ENCODE measurements at regions of chr2 and their contacts with region 1.

Region 1: DNA sequence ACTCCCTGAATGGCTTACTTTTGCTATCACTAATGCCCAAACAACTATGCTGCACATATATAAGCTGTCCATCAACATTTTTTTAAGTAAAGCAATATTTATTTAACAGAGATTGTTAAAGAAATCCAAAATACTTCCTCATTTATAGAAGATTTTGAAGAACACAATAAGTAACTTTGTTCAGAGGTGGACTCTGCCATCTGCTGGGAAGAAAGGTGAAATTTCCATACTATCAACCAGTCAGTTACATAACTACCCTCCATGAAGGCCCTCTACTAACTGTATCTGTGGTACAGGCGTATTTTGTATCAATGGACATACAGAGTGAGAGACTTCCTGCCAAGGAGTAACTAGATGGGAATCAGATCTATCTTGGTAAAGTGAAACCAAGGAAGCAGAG is 106.0 kb downstream of the DTNB start:
- DNase-seq: peak in 1 of 2 experiments; percentile 32
- H3K4me3 ChIP-seq: no peak overlapping the region
- H3K4me3 Mint-ChIP-seq: no peak overlapping the region
- H3K27ac Mint-ChIP-seq: no peak overlapping the region
- H3K4me1 ChIP-seq: no peaks in the 10 kb centered on the region
- H3K4me1 Mint-ChIP-seq: no peaks in the 10 kb centered on the region
- H3K27me3 ChIP-seq: no peaks in the 10 kb centered on the region
- H3K27me3 Mint-ChIP-seq: no peaks in the 10 kb centered on the region
- CTCF ChIP-seq: peak; percentile 51 to 52

Region 2: GRCh38 chr2:25309402-25309801 is 258.0 kb before region 1 on chr2:
- CTCF ChIA-PET with region 1: no interaction called
- POLR2A ChIA-PET with region 1: no interaction called
- intact Hi-C with region 1: loop called (anchors 1 kb)
- DNase-seq: peak; percentile 58 to 68
- H3K4me3 ChIP-seq: no peak overlapping the region
- H3K4me3 Mint-ChIP-seq: no peak overlapping the region
- H3K27ac Mint-ChIP-seq: no peak overlapping the region
- H3K4me1 ChIP-seq: 0 out of 2 replicates have a peak, but pooled peaks cover 3% of the 10 kb centered on the region
- H3K4me1 Mint-ChIP-seq: peaks cover 5% of the 10 kb centered on the region
- H3K27me3 ChIP-seq: no peaks in the 10 kb centered on the region
- H3K27me3 Mint-ChIP-seq: no peaks in the 10 kb centered on the region
- CTCF ChIP-seq: peak; percentile 49 to 53

Region 3: DNA sequence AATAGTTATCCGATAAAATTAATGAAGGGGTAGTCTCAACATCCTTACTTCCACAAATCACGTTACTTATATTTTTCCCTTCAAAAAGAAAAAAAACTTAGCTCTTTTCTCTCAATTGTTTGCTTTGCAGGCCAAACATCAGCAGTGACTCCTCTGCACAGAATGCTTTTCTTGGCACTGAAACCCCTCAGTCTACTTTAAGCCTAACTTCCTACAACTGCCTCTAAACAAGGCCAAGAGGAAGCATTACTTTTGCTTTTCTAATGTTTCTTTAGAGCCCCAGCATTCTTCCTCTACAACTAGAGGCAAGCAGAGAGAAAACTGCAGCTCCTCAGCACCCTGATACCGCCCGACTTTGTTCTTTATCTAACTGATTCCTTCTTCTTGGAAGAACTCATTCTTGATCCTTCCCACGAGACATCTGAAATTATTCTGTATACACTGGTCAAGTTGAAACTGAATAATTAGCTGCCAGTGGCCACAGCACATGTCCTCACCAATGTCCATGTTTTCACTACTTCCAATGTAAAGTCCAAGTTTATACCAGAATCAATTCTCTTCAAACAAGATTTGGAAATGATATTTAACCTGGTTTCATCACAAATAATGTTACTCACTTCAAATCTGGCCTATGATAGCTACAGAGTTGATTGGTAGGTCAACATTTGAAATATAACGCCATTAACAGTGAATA is 50.7 kb after region 1 on chr2:
- CTCF ChIA-PET with region 1: no interaction called
- POLR2A ChIA-PET with region 1: no interaction called
- intact Hi-C with region 1: no loop called
- DNase-seq: no peak
- H3K4me3 ChIP-seq: no peak overlapping the region
- H3K4me3 Mint-ChIP-seq: peak overlapping the region; percentile 43
- H3K27ac Mint-ChIP-seq: peak overlapping the region; percentile 37
- H3K4me1 ChIP-seq: peaks cover 63% of the 10 kb centered on the region
- H3K4me1 Mint-ChIP-seq: peaks cover 52% of the 10 kb centered on the region
- H3K27me3 ChIP-seq: no peaks in the 10 kb centered on the region
- H3K27me3 Mint-ChIP-seq: no peaks in the 10 kb centered on the region
- CTCF ChIP-seq: no peak

Region 4: GRCh38 chr2:26018176-26018716 is 450.8 kb after region 1 on chr2:
- CTCF ChIA-PET with region 1: no interaction called
- POLR2A ChIA-PET with region 1: no interaction called
- intact Hi-C with region 1: no loop called
- DNase-seq: peak; percentile 76 to 78
- H3K4me3 ChIP-seq: no peak overlapping the region
- H3K4me3 Mint-ChIP-seq: no peak overlapping the region
- H3K27ac Mint-ChIP-seq: peak overlapping the region; percentile 87
- H3K4me1 ChIP-seq: peaks cover 34% of the 10 kb centered on the region
- H3K4me1 Mint-ChIP-seq: peaks cover 42% of the 10 kb centered on the region
- H3K27me3 ChIP-seq: no peaks in the 10 kb centered on the region
- H3K27me3 Mint-ChIP-seq: no peaks in the 10 kb centered on the region
- CTCF ChIP-seq: no peak